Activated CD4-positive, alpha-beta memory T cell treated with anti-CD3 and anti-CD28 coated beads for 36 hours (primary cell): ENCODE measurements at regions of chr7 and their contacts with region 1.

Region 1: GRCh38 chr7:50449881-50450589 is at the start of gene FIGNL1:
- DNase-seq: peak; percentile 90
- H3K4me3 Mint-ChIP-seq: peak within 1 kb of the TSS; percentile 92
- H3K27ac Mint-ChIP-seq: peak within 1 kb of the TSS; percentile 91
- H3K4me1 Mint-ChIP-seq: peaks cover 48% of the 10 kb centered on the region
- H3K27me3 Mint-ChIP-seq: no peaks in the 10 kb centered on the region
- total RNA-seq, gene FIGNL1: 46.2 to 49.0 TPM

Region 2: GRCh38 chr7:50142425-50143017 is 307.5 kb before region 1 on chr7:
- CTCF ChIA-PET with region 1: no interaction called
- POLR2A ChIA-PET with region 1: interaction called, 3 read pairs
- intact Hi-C with region 1: loop called (anchors 1 kb)
- DNase-seq: no peak
- H3K4me3 Mint-ChIP-seq: peak overlapping the region; percentile 14
- H3K27ac Mint-ChIP-seq: peak overlapping the region; percentile 59
- H3K4me1 Mint-ChIP-seq: peaks cover 28% of the 10 kb centered on the region
- H3K27me3 Mint-ChIP-seq: peaks cover 2% of the 10 kb centered on the region

Region 3: GRCh38 chr7:50304158-50304910 is 145.7 kb before region 1 on chr7 and contains the start of gene IKZF1:
- CTCF ChIA-PET with region 1: no interaction called
- POLR2A ChIA-PET with region 1: interaction called, 3 read pairs
- intact Hi-C with region 1: loop called (anchors 1 kb)
- DNase-seq: peak; percentile 76
- H3K4me3 Mint-ChIP-seq: peak within 1 kb of the TSS; percentile 86
- H3K27ac Mint-ChIP-seq: peak within 1 kb of the TSS; percentile 94
- H3K4me1 Mint-ChIP-seq: peaks cover 42% of the 10 kb centered on the region
- H3K27me3 Mint-ChIP-seq: no peaks in the 10 kb centered on the region
- total RNA-seq, gene IKZF1: 207 to 216 TPM

Region 4: DNA sequence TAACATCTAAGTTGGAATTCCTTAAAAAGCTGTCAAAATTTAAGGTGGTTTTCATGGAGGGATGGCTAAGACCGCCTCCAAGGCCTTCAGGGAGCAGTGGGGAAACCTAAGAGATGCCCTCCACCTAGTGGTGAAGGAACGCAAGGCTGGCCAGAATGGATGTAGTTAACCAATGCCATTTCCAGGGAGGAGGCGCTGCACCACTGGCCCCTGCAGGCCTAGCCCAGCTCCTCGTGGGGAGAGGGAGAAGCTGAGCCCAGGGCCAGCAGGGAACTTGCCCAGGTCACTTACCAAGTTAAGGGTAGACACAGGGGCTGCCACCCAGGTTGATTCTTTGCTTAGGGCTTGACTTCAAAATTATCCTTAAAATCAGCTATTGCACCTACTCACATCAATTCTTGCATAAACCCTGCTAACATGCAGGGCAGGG is 31.9 kb before region 1 on chr7:
- CTCF ChIA-PET with region 1: interaction called, 18 read pairs
- POLR2A ChIA-PET with region 1: no interaction called
- intact Hi-C with region 1: loop called (anchors 1 kb)
- DNase-seq: peak; percentile 87
- H3K4me3 Mint-ChIP-seq: no peak overlapping the region
- H3K27ac Mint-ChIP-seq: no peak overlapping the region
- H3K4me1 Mint-ChIP-seq: peaks cover 24% of the 10 kb centered on the region
- H3K27me3 Mint-ChIP-seq: no peaks in the 10 kb centered on the region

Region 5: DNA sequence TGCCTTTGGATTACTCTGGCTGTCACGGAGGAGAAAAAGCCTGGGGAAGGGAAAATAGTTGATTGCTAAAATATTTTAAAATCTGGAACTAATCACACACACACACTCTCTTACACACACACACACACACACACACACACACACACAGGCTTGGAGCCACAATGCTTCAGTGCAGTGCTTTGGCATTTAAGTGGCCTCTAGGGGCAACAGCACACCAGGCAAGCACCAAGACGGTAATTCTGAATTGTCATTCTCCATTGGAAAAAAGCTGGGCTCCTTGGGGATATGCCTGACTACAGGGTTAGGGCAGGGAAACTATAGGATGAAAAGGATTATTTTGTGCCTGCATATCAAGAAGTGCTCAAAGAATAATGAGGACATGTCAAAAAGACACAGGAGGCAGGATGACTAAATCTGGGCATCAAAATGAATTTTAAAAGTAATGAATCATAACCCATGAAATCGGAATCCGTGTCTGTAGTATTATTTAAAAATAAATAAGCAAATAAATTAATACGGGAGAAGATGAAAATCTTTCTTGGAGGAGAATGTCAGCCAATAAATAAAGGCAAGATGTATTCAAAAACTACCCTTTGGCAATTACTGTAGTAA is 145.6 kb after region 1 on chr7:
- CTCF ChIA-PET with region 1: no interaction called
- POLR2A ChIA-PET with region 1: no interaction called
- intact Hi-C with region 1: loop called (anchors 1 kb)
- DNase-seq: peak; percentile 24
- H3K4me3 Mint-ChIP-seq: no peak overlapping the region
- H3K27ac Mint-ChIP-seq: no peak overlapping the region
- H3K4me1 Mint-ChIP-seq: peaks cover 21% of the 10 kb centered on the region
- H3K27me3 Mint-ChIP-seq: peaks cover 6% of the 10 kb centered on the region

Region 6: DNA sequence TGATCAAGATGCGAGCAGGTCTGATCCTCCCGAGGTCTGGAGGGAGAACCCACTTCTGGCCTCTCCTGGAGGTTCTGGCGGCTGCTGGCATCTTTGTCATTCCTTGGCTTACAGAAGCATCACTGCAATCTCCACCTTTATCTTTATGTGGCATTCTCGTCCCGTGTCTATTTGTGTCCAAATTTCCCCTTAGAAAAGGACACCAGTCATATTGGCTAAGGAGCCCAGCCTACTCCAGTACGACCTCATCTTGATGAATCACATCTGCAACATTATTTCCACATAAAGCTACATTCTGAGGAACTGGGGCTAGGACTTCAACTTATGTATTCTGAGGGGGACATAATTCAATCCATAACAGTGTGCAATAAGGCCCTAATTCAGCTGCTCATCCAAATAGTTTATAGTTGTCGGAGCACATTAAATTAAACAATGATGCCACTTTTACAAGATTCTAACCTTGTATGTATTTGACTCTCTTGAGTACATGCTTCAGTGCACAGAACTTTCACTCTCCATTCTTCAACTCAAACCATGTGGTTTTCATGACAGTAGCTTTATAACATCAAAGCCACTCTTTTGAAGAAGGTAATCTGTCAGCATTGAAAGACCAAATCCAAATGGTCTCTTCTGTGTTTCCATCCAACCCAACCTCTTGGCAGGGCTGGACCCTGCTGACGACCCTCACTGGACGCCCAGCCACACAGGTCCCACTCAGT is 201.4 kb after region 1 on chr7:
- CTCF ChIA-PET with region 1: no interaction called
- POLR2A ChIA-PET with region 1: no interaction called
- intact Hi-C with region 1: no loop called
- DNase-seq: no peak
- H3K4me3 Mint-ChIP-seq: no peak overlapping the region
- H3K27ac Mint-ChIP-seq: no peak overlapping the region
- H3K4me1 Mint-ChIP-seq: no peaks in the 10 kb centered on the region
- H3K27me3 Mint-ChIP-seq: no peaks in the 10 kb centered on the region

Region 7: DNA sequence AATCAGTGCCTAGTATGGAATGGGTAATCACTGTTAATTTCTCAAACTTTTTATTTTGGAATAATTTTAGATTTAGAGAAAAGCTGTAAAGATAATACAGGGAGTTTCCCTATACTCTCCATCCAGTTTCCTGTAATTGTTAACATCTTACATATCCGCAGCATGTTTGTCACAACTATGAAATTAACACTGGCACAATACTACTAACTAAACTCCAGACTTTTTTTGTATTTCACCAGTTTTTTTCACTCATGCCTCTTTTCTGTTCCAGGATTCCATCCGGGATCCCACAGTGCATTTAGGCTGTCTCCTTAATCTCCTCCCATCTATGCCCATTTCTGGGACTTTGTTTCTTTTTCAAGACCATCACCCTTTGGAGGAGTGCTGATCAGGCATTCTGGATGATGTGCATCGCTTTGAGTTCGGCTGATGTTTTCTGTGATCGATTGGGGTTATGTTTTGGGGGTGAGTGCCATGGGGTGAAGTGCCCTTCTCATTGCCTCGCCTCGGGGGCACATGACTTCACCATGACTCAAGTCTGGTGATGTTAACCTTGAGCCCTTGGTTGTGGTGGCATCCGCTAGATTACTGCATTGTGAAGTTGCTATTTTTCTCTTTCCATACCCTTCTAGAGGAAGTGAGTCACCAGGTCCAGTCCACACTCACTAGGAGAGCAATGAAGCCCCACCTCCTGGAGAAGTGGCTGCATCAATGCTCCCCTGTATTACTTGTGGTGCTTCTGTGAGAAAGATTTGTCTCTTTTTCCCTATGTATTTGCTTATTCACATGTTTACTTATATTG is 376.5 kb after region 1 on chr7:
- CTCF ChIA-PET with region 1: no interaction called
- POLR2A ChIA-PET with region 1: no interaction called
- intact Hi-C with region 1: loop called (anchors 2 kb)
- DNase-seq: peak; percentile 73
- H3K4me3 Mint-ChIP-seq: no peak overlapping the region
- H3K27ac Mint-ChIP-seq: peak overlapping the region; percentile 1
- H3K4me1 Mint-ChIP-seq: peaks cover 15% of the 10 kb centered on the region
- H3K27me3 Mint-ChIP-seq: peaks cover 9% of the 10 kb centered on the region